Activated CD8-positive, alpha-beta T cell treated with anti-CD3 and anti-CD28 coated beads for 36 hours (primary cell): ENCODE measurements at regions of chr11 and their contacts with region 1.

Region 1: GRCh38 chr11:57800444-57801182 is 39.0 kb downstream of the CTNND1 start:
- DNase-seq: peak; percentile 6
- ATAC-seq: peak; percentile 96
- H3K4me3 Mint-ChIP-seq: no peak overlapping the region
- H3K27ac Mint-ChIP-seq: peak overlapping the region; percentile 63
- H3K4me1 Mint-ChIP-seq: peaks cover 21% of the 10 kb centered on the region
- H3K27me3 Mint-ChIP-seq: no peaks in the 10 kb centered on the region
- CTCF ChIP-seq: peak; percentile 92

Region 2: DNA sequence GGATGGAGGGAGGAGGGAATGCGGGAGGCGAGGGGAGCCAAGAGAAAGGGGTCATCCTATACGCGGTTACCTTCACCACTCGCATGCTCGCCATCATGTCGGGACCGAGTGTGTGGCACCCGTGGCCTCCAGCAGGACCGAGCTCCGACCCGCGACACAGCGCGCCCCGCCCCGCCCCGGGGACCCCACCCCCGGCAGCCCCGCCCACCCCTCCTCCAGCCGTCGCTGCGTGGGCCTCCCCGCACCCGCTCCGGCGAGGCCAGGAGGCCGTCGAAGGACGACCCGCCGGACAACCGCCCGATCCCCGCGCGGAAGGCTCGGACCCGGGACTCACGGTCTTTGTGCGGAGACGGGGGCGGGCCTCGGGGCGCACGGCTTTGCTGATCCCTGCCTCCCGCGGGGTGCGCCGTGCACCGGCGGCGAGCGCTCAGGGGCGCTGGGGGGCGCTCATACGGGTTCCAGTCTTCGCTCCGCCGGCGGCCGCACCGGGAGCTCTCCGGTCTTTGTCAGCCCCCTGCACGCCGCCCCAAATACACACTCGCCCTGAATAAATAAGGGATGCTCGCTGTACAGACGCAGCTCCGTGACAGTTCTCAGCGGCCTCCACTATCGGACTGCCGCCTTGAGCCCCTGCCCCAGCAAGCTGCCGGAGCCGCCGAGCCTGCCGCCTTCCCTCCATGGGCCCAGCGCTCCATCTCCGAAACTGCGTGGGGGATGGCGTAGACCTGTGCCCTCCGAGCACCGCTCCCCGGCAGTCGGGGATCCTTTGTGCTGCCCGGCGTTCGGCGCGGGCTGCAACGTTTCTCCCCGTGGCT is 232.9 kb before region 1 on chr11 and contains the start of gene UBE2L6:
- CTCF ChIA-PET with region 1: interaction called, 16 read pairs
- POLR2A ChIA-PET with region 1: no interaction called
- intact Hi-C with region 1: no loop called
- DNase-seq: peak; percentile 74
- ATAC-seq: peak; percentile 82
- H3K4me3 Mint-ChIP-seq: peak within 1 kb of the TSS; percentile 89
- H3K27ac Mint-ChIP-seq: peak within 1 kb of the TSS; percentile 98
- H3K4me1 Mint-ChIP-seq: peaks cover 35% of the 10 kb centered on the region
- H3K27me3 Mint-ChIP-seq: no peaks in the 10 kb centered on the region
- CTCF ChIP-seq: no peak
- total RNA-seq, gene UBE2L6: 148 to 159 TPM

Region 3: GRCh38 chr11:57667736-57668435 is 132.7 kb before region 1 on chr11 and contains the start of gene ZDHHC5:
- CTCF ChIA-PET with region 1: interaction called, 11 read pairs
- POLR2A ChIA-PET with region 1: interaction called, 3 read pairs
- intact Hi-C with region 1: no loop called
- DNase-seq: peak; percentile 99
- ATAC-seq: peak; percentile 86
- H3K4me3 Mint-ChIP-seq: peak within 1 kb of the TSS; percentile 95
- H3K27ac Mint-ChIP-seq: peak within 1 kb of the TSS; percentile 99
- H3K4me1 Mint-ChIP-seq: peaks cover 36% of the 10 kb centered on the region
- H3K27me3 Mint-ChIP-seq: no peaks in the 10 kb centered on the region
- CTCF ChIP-seq: peak; percentile 26
- total RNA-seq, gene ZDHHC5: 53.7 to 54.8 TPM

Region 4: GRCh38 chr11:57712256-57713150 is 88.1 kb before region 1 on chr11 and contains the start of gene TMX2:
- CTCF ChIA-PET with region 1: interaction called, 18 read pairs
- POLR2A ChIA-PET with region 1: no interaction called
- intact Hi-C with region 1: no loop called
- DNase-seq: peak; percentile 97
- ATAC-seq: peak; percentile 91
- H3K4me3 Mint-ChIP-seq: peak within 1 kb of the TSS; percentile 85
- H3K27ac Mint-ChIP-seq: peak within 1 kb of the TSS; percentile 90
- H3K4me1 Mint-ChIP-seq: peaks cover 46% of the 10 kb centered on the region
- H3K27me3 Mint-ChIP-seq: no peaks in the 10 kb centered on the region
- CTCF ChIP-seq: no peak
- total RNA-seq, gene TMX2: 53.1 to 58.6 TPM

Region 5: DNA sequence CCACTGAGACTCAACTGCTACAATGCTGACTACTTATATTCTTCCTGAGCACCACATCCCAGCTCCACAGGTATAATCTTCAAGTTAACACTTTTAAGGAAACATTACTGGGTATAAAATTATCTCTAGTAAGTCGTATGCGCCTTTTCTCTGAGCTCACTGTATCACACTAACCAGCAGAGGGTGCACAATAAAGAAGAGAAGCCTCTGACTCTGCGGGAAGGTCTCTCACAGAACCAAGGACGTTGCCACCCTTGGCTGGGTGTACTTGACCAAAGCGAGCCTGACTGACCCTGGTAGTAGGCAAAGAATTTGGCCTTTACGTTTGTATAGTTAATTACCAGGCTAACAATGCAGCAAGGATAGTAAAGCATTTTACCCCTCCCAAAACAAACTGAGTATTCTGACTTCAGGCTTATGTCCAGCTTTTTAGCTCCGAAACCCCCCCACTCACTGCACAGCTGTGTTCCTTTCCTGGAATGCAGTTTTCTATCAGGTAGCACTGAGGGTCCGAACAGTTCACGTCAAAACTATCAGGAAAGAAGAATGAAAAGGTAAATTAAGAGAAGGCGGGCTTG is 48.8 kb before region 1 on chr11 and contains the start of gene BTBD18:
- CTCF ChIA-PET with region 1: interaction called, 142 read pairs
- POLR2A ChIA-PET with region 1: no interaction called
- intact Hi-C with region 1: loop called (anchors 5 kb)
- DNase-seq: no peak
- ATAC-seq: peak; percentile 64
- H3K4me3 Mint-ChIP-seq: no peak within 1 kb of the TSS
- H3K27ac Mint-ChIP-seq: peak within 1 kb of the TSS; percentile 53
- H3K4me1 Mint-ChIP-seq: peaks cover 5% of the 10 kb centered on the region
- H3K27me3 Mint-ChIP-seq: no peaks in the 10 kb centered on the region
- CTCF ChIP-seq: peak; percentile 25
- total RNA-seq, gene BTBD18: not detected

Region 6: DNA sequence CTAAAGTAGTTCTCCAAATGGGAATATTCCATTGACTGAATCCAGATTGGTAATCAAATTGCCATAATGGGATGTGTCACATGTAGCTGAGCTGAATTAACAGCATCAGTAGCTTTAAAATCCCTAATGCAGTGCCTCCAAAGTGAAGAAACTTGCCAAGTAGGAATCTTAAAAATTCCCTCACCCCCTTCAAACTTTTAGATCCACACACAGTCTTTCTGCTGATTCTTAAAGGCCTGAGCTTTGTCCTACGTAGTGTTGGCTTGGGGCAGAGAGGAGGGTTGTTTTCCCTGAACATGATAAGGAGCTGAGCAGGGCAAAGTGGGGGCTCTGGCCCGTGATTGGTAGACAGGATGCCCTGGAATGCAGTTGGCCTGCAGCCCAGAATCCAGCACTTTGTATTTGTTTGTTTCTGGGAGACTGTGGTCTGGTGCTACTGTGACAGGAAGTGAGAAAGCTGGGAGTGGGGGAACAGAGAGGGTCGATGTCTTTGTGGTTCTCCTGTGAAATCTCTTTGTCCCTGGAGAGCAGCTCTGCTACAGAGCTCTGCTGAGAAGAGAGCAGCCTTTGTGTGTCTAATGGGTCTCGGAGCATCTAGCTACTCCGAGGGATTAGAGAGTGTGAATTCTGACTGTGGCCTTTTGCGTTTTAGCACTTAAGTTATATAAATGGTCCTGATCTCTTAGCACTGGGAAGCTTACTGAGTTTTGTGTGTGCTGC is 22.1 kb before region 1 on chr11:
- CTCF ChIA-PET with region 1: interaction called, 43 read pairs
- POLR2A ChIA-PET with region 1: no interaction called
- intact Hi-C with region 1: no loop called
- DNase-seq: no peak
- ATAC-seq: no peak
- H3K4me3 Mint-ChIP-seq: no peak overlapping the region
- H3K27ac Mint-ChIP-seq: no peak overlapping the region
- H3K4me1 Mint-ChIP-seq: peaks cover 24% of the 10 kb centered on the region
- H3K27me3 Mint-ChIP-seq: no peaks in the 10 kb centered on the region
- CTCF ChIP-seq: no peak

Region 7: GRCh38 chr11:57812634-57813033 is 12.0 kb after region 1 on chr11:
- CTCF ChIA-PET with region 1: interaction called, 22 read pairs
- POLR2A ChIA-PET with region 1: no interaction called
- intact Hi-C with region 1: no loop called
- DNase-seq: no peak
- ATAC-seq: no peak
- H3K4me3 Mint-ChIP-seq: no peak overlapping the region
- H3K27ac Mint-ChIP-seq: no peak overlapping the region
- H3K4me1 Mint-ChIP-seq: peaks cover 5% of the 10 kb centered on the region
- H3K27me3 Mint-ChIP-seq: no peaks in the 10 kb centered on the region
- CTCF ChIP-seq: no peak

Region 8: DNA sequence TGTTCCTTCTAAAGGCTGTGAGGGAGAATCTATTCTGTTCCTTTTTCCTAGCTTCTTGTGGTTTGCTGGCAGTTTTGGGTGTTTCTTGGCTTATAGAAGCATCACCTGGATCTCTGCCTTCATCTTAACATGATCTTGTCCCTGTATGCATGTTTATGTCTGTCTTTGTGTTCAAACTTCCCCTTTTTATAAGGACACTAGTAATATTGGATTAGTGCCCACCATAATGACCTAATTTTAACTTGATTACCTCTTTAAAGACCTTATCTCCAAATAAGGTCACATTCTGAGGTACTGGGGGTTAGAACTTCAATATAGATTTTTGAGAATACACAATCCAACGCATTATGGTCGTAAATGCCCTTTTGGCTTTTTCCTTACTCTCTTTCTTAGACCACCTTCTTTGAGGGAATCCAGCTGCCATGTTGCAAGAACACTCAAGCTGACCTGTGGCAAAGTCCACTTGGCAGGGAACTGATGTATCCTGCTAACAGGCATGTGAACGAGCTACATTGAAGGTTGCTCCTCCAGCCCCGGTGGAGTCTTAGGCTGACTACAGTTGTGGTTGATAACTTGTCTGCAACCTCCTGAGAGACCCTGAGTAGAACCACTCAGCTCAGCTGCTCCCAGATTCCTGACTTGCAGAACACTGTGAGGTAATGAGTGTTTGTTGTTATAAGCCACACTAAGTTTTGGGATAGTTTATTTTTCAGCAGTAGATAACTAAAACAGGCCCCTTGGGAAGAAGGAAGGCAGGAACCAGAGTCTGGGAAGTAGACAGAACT is 95.9 kb after region 1 on chr11:
- CTCF ChIA-PET with region 1: no interaction called
- POLR2A ChIA-PET with region 1: no interaction called
- intact Hi-C with region 1: no loop called
- DNase-seq: no peak
- ATAC-seq: no peak
- H3K4me3 Mint-ChIP-seq: no peak overlapping the region
- H3K27ac Mint-ChIP-seq: no peak overlapping the region
- H3K4me1 Mint-ChIP-seq: no peaks in the 10 kb centered on the region
- H3K27me3 Mint-ChIP-seq: peaks cover 17% of the 10 kb centered on the region
- CTCF ChIP-seq: no peak